Activated CD8-positive, alpha-beta memory T cell treated with anti-CD3 and anti-CD28 coated beads, Interleukin-2, amount 10 ng/mL, durations not matched to agents 7 days and 5 days (primary cell): ENCODE measurements at regions of chr1 and their contacts with region 1.

Region 1: GRCh38 chr1:203273206-203273868 is 32.0 kb upstream of the BTG2 start:
- DNase-seq: peak; percentile 93
- ATAC-seq: peak; percentile 83
- H3K4me3 Mint-ChIP-seq: peak overlapping the region; percentile 53
- H3K27ac Mint-ChIP-seq: peak overlapping the region; percentile 77
- H3K4me1 Mint-ChIP-seq: peaks cover 64% of the 10 kb centered on the region
- H3K27me3 Mint-ChIP-seq: no peaks in the 10 kb centered on the region

Region 2: GRCh38 chr1:202926720-202927491 is 346.4 kb before region 1 on chr1 and contains the start of gene KLHL12:
- CTCF ChIA-PET with region 1: no interaction called
- DNase-seq: peak; percentile 97
- ATAC-seq: peak; percentile 97
- H3K4me3 Mint-ChIP-seq: peak within 1 kb of the TSS; percentile 92
- H3K27ac Mint-ChIP-seq: peak within 1 kb of the TSS; percentile 93
- H3K4me1 Mint-ChIP-seq: peaks cover 29% of the 10 kb centered on the region
- H3K27me3 Mint-ChIP-seq: peaks cover 7% of the 10 kb centered on the region
- total RNA-seq, gene KLHL12: 30.8 to 32.7 TPM

Region 3: DNA sequence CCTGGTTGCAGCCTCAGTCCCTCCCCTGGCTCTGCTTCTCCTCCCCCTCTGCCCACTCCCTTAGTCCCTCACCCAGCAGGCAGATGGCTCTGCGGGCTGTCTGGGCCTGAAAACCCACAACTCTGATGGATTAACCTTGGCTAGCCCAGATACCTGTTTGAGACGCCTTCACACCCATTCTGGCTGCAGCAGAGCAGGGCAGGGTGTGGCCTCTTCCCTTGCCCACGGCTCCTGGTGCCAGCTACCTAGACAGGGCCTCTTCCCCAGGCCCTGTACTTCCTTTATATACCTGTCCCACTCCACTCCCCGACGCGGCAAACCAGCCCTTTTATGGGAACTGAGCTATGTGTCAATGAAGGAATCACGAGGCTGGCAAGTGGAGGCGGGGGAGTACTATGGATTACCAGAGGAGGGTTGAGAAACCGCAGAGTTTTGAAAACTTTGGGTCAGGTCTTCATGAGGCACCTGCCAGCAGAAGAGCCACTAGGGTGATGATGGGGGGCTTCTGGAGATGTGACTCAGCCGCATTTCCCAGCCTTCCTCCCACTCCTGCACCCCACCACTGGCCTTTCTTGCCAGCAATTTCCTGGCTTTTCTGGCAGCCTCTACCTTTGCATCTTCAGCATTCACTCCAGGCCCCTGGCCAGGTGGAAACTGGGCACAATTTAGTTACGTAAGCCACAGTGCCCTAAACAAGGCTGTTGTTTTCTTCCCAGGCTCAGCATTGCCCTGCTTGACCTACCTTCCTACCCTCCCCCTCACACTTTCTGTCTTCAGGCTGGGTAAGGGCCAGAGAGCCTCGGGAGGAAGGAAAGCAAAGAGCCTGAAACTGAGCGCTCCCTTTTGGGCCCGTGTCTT is 86.7 kb before region 1 on chr1 and contains the start of gene CHI3L1:
- CTCF ChIA-PET with region 1: no interaction called
- DNase-seq: no peak
- ATAC-seq: no peak
- H3K4me3 Mint-ChIP-seq: no peak within 1 kb of the TSS
- H3K27ac Mint-ChIP-seq: no peak within 1 kb of the TSS
- H3K4me1 Mint-ChIP-seq: no peaks in the 10 kb centered on the region
- H3K27me3 Mint-ChIP-seq: peaks cover 27% of the 10 kb centered on the region
- total RNA-seq, gene CHI3L1: not detected

Region 4: DNA sequence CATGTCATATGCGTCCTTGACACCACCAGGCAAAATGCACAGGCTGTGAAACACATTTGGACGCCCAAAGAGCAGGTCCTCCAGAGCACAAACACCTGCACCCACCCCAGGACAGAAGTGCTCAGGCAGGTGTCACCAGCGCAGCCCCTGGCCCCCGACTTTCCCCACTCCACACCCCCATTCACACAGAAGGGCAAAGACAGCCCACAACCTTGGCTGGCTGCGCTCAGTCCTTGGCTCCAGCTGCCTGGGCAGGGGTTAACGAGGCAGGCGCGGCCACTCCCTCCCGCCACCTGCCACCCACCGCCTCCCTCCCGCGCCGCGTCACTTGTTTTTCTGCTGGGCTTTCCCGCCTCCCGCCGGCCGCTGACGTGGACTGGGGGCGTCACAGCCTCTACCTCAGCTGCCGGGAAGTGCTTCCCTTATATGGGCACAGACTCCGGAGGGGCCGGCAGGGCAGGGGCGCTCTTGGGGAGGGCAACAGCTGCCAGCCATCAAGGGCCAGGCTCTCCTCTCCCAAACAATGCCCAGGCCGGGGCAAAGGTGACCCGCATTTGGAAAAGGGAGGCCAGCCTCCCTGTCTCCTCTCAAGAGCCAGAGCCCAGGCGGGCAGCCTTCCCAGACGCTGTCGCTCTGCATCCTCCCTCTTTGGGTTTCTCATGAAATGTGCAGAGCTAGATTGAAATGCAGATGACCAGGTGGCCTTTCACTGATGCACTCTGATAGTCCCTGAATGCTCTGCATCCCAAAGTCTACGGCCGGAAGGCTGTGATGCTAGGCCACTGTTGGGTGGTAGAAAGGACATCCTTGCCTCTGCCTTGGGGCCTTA is 17.1 kb after region 1 on chr1:
- CTCF ChIA-PET with region 1: interaction called, 128 read pairs
- DNase-seq: peak; percentile 97
- ATAC-seq: peak; percentile 62
- H3K4me3 Mint-ChIP-seq: peak overlapping the region; percentile 75
- H3K27ac Mint-ChIP-seq: peak overlapping the region; percentile 99
- H3K4me1 Mint-ChIP-seq: peaks cover 68% of the 10 kb centered on the region
- H3K27me3 Mint-ChIP-seq: no peaks in the 10 kb centered on the region

Region 5: GRCh38 chr1:203299169-203299568 is 25.8 kb after region 1 on chr1:
- CTCF ChIA-PET with region 1: interaction called, 25 read pairs
- DNase-seq: no peak
- ATAC-seq: no peak
- H3K4me3 Mint-ChIP-seq: no peak overlapping the region
- H3K27ac Mint-ChIP-seq: no peak overlapping the region
- H3K4me1 Mint-ChIP-seq: peaks cover 39% of the 10 kb centered on the region
- H3K27me3 Mint-ChIP-seq: no peaks in the 10 kb centered on the region

Region 6: GRCh38 chr1:203304919-203305808 is 31.8 kb after region 1 on chr1 and contains the start of gene BTG2:
- CTCF ChIA-PET with region 1: interaction called, 345 read pairs
- DNase-seq: peak; percentile 93
- ATAC-seq: peak; percentile 81
- H3K4me3 Mint-ChIP-seq: peak within 1 kb of the TSS; percentile 95
- H3K27ac Mint-ChIP-seq: peak within 1 kb of the TSS; percentile 96
- H3K4me1 Mint-ChIP-seq: peaks cover 58% of the 10 kb centered on the region
- H3K27me3 Mint-ChIP-seq: no peaks in the 10 kb centered on the region
- total RNA-seq, gene BTG2: 72.2 to 142 TPM

Region 7: GRCh38 chr1:203326830-203327683 is 53.7 kb after region 1 on chr1:
- CTCF ChIA-PET with region 1: interaction called, 806 read pairs
- DNase-seq: peak; percentile 96
- ATAC-seq: peak; percentile 91
- H3K4me3 Mint-ChIP-seq: peak overlapping the region; percentile 71
- H3K27ac Mint-ChIP-seq: peak overlapping the region; percentile 91
- H3K4me1 Mint-ChIP-seq: peaks cover 66% of the 10 kb centered on the region
- H3K27me3 Mint-ChIP-seq: no peaks in the 10 kb centered on the region

Region 8: DNA sequence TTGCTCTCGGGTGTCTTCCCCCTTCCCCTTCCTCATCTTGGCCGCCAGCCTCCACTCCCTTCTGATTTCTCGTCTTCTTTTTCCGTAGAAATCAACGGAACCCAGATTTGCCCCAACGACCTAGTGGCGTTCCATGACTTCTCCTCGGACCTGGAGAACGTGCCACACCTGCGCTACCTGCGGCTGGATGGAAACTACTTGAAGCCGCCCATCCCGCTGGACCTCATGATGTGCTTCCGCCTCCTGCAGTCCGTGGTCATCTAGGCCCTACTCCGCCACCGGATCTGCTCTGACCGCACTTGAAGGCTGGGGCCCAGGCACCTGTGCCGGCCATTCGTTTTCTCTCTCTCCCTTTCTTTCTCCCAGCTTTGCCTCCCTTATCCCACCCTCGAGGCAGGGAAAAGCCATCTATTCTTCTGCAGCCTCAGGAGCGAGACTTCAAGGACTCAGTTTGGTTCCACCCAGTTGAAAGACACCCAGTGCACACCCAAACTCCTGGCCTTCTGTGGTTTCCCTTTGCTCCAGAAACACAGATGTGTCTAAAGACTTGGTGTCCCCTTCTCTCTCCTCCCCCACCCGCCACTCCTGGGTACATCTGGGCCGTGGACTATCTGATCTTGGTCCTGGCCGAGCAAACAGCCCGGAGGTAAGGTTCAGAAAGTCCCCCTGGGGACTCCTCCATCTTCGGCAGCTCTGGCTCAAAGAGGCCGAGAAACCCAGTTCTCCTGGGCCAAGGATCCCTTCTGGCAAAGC is 213.5 kb after region 1 on chr1:
- CTCF ChIA-PET with region 1: interaction called, 194 read pairs
- DNase-seq: no peak
- ATAC-seq: no peak
- H3K4me3 Mint-ChIP-seq: no peak overlapping the region
- H3K27ac Mint-ChIP-seq: no peak overlapping the region
- H3K4me1 Mint-ChIP-seq: peaks cover 4% of the 10 kb centered on the region
- H3K27me3 Mint-ChIP-seq: peaks cover under 1% of the 10 kb centered on the region

Region 9: GRCh38 chr1:203598752-203599151 is 325.4 kb after region 1 on chr1:
- CTCF ChIA-PET with region 1: no interaction called
- DNase-seq: no peak
- ATAC-seq: no peak
- H3K4me3 Mint-ChIP-seq: no peak overlapping the region
- H3K27ac Mint-ChIP-seq: no peak overlapping the region
- H3K4me1 Mint-ChIP-seq: peaks cover 24% of the 10 kb centered on the region
- H3K27me3 Mint-ChIP-seq: no peaks in the 10 kb centered on the region